Right lobe of liver (tissue), 6 donors: ENCODE measurements at regions of chr1 and their contacts with region 1.

Region 1: DNA sequence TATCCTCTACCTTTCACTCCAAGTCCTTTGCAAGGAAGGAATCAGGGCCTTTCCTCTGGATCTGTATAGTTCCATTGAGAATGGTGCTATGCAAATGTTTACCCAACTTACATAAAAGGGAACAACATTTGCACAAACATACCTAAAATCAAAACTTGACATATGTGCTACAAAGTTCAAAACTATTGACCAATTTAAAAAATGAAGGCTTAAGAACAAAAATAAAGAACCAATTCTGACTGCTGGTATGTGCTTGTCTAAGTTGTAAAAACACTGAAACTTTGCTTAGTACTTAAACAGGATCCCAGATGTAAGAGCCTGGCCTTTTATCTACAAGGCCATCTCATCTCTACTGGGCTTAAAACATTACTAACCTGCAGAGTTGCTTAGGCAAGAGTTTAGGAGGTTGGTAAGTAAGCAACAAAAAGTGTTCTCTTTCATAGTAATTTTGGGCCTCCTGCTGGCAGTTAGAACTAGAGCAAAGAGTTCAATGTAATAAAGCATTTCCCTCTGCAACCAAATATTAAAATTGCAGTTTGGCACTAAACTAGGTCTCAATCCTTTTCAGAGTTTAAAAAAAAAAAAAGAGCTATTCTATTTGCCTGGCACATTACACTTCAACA is 2.0 kb downstream of the SCMH1 start:
- DNase-seq: no peak
- ATAC-seq: peak; percentile 62 to 69 (median 66)
- H3K4me3 ChIP-seq: peak overlapping the region in 1 of 3 donors; percentile 73
- H3K27ac ChIP-seq: peak overlapping the region in 1 of 3 donors; percentile 92
- H3K4me1 ChIP-seq: peaks cover 0 to 32% (median 7%) of the 10 kb centered on the region in 4 donors
- H3K27me3 ChIP-seq: no peaks in the 10 kb centered on the region
- CTCF ChIP-seq: peak; percentile 29 to 52 (median 45)
- POLR2A ChIP-seq: no peak

Region 2: DNA sequence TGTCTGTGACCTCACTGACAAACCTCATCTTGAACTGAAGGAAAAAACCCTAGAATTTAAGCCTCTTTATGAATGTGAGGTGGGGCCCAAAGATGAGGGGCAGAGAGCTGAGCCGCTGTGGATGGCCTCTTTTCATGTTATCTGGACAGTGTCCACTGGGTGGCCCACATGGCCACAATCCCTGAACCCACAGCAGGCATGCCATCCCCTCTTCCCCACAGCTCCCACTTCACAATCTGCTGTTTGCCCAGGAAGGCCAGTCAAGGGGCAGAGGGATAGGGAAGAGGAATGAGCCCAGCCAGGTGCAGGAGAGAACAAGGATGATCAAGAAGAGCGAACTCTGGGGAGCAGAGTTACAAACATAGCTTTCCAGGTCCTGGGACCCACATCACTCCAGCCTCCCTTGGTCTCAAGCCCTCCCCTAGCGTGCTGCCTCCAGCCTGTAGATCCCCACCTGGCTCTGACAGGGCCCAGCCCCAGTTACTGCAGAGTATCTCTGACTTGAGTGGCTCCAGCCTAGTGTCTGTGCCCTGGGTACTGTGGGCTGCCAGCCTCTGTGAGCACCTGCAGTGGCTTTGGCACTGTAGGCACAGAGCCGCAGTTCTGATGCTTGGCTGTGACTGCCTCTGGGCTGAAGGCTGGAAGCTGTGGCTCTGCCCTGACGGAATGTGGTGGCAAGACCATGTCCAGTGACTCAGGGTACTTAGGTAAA is 216.7 kb before region 1 on chr1:
- intact Hi-C with region 1: loop called in 1 of 2 experiments (anchors 10 kb)
- DNase-seq: peak in 1 of 3 donors; percentile 22
- ATAC-seq: peak; percentile 22 to 57 (median 42)
- H3K4me3 ChIP-seq: no peak overlapping the region
- H3K27ac ChIP-seq: no peak overlapping the region
- H3K4me1 ChIP-seq: no peaks in the 10 kb centered on the region
- H3K27me3 ChIP-seq: no peaks in the 10 kb centered on the region
- CTCF ChIP-seq: peak; percentile 24 to 32 (median 30)
- POLR2A ChIP-seq: no peak

Region 3: DNA sequence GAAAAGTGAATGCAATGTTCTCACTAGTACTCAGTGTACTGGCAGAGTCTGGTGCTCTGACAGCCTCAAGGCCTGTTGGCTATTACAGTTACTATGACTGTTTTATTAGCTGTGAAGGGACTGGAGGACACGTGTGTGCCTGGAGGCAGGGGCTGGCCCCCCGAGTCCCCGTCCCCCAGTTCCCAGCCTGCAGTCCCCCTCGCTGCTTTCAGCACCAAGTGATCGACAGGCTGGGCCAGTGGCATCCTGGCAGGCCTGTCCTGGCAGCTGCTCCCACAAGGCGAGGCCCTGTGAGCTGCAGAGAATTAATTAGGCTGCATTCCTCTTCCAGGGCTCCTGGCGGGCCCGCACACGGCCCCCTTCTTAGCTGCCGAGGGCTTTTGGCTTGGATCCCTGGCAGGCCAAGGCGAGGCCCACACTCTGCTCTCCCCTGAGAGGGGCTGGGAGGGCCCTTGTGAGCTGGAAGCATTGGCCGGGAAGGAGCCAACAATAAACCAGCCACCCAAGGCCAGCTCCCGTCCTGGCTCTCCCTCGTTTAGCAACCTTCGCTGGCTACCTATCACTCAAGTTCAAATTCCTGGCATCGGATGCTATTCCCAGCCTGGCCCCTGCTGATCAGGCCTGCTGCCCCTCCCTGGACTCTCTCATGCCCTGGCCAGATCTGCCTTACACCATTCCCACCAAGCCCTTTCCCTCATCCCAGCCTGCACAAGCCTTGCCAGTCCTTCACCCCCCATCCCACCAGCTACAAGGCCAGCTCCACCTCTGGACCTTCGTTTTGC is 234.6 kb after region 1 on chr1:
- intact Hi-C with region 1: no loop called
- DNase-seq: peak in 1 of 3 donors; percentile 52
- ATAC-seq: peak in 1 of 4 donors; percentile 4
- H3K4me3 ChIP-seq: no peak overlapping the region
- H3K27ac ChIP-seq: no peak overlapping the region
- H3K4me1 ChIP-seq: peaks cover 0 to 30% (median 9%) of the 10 kb centered on the region in 4 donors
- H3K27me3 ChIP-seq: no peaks in the 10 kb centered on the region
- CTCF ChIP-seq: no peak
- POLR2A ChIP-seq: no peak